ENCODE measurements at regions of chr11 and their contacts with region 1.

Region 1: GRCh38 chr11:118791111-118791965 is at the start of gene DDX6:
- DNase-seq: peak; percentile 75
- ATAC-seq: peak; percentile 65
- H3K4me3 ChIP-seq: peak within 1 kb of the TSS; percentile 88
- H3K27ac ChIP-seq: peak within 1 kb of the TSS; percentile 81
- H3K4me1 ChIP-seq: peaks cover 31% of the 10 kb centered on the region
- H3K27me3 ChIP-seq: no peaks in the 10 kb centered on the region
- CTCF ChIP-seq: peak; percentile 26
- total RNA-seq, gene DDX6: 59.4 and 66.3 TPM in 2 replicates

Region 2: DNA sequence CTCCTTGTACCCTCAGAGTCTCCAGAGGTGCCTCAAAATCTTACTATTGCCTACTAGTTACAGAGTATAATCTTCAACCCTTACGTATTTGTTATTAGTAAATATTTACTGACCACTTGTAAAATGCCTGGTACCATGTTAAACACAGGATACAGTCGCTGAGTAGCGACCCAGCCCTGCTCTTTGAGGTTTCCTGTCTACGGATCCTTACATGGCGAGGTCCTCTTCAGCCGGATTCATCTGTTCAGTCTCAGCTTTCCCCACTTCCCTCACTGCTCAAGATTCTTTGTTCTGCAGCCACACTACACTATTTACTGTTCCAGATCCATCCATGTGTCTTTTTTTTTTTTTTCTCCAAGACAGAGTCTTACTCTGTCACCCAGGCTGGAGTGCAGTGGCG is 277.2 kb before region 1 on chr11:
- CTCF ChIA-PET with region 1: no interaction called
- POLR2A ChIA-PET with region 1: no interaction called
- intact Hi-C with region 1: no loop called
- DNase-seq: no peak
- ATAC-seq: peak; percentile 67
- H3K4me3 ChIP-seq: no peak overlapping the region
- H3K27ac ChIP-seq: no peak overlapping the region
- H3K4me1 ChIP-seq: no peaks in the 10 kb centered on the region
- H3K27me3 ChIP-seq: no peaks in the 10 kb centered on the region
- CTCF ChIP-seq: no peak

Region 3: GRCh38 chr11:118547132-118547531 is 244.2 kb before region 1 on chr11:
- CTCF ChIA-PET with region 1: no interaction called
- POLR2A ChIA-PET with region 1: no interaction called
- intact Hi-C with region 1: no loop called
- DNase-seq: no peak
- ATAC-seq: no peak
- H3K4me3 ChIP-seq: no peak overlapping the region
- H3K27ac ChIP-seq: no peak overlapping the region
- H3K4me1 ChIP-seq: no peaks in the 10 kb centered on the region
- H3K27me3 ChIP-seq: no peaks in the 10 kb centered on the region
- CTCF ChIP-seq: no peak

Region 4: DNA sequence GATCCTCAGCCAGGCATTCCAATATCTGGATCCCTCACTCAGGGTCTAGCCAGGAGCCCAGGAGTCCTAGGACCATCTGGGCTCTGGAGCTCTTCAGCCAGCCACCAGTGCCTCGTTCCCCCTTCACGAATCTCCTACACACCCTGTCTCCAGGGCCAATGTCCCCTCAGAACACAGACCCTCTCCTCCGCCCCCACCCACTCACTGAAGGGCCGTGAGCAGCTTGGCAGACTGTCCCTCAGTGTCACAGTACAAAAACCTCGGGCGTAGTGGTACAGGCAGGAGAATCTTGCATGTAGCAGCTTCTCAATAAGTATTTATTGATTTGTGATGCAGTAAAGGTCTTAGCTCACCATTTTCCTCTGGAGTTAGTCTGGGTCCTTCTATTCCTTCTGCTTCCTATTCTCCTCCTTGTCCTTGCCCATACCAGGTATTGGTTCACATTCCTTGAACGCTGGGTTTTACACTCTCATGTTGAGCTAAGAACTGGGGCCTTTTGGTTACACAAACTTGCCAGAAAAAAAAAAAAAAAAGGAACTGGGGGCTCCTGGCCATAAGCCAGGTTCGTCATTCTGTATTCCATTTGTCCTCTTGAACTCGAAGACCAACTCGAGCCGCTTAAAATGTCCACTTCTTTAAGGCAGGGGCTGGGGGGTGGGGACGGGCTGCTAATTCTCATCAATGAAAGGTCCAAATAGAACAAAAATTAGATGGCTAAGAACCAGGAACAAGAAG is 94.7 kb after region 1 on chr11:
- CTCF ChIA-PET with region 1: no interaction called
- POLR2A ChIA-PET with region 1: interaction called, 17 read pairs
- intact Hi-C with region 1: no loop called
- DNase-seq: no peak
- ATAC-seq: no peak
- H3K4me3 ChIP-seq: no peak overlapping the region
- H3K27ac ChIP-seq: no peak overlapping the region
- H3K4me1 ChIP-seq: peaks cover 16% of the 10 kb centered on the region
- H3K27me3 ChIP-seq: no peaks in the 10 kb centered on the region
- CTCF ChIP-seq: no peak

Region 5: DNA sequence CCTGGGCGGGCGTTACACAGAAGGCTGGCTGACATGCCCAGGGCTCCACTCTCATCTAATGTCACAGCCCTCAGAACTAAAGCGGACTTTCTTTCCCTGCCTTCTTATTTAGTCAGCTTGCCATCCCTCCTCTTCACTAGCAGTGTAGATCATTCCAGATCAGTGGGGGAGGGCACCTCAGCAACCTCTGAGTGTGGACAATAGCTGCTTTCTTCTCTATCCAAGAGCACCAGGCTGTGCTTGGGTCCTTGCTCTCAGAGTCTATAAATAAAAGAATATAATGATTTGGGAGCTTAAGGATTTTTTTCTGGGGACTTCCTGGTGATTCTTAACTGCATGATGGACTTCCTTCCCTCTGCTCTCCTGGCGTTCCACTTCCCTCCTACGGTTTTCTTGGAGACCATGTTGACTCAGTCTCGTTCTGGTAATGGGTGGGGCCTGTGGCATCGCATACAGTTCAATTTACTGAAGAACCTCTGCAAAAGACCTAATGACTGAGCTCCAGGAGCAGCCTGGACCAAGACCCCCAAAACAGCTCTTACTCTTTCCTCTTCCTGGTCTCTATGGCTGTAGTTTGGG is 290.4 kb after region 1 on chr11:
- CTCF ChIA-PET with region 1: no interaction called
- POLR2A ChIA-PET with region 1: no interaction called
- intact Hi-C with region 1: no loop called
- DNase-seq: no peak
- ATAC-seq: no peak
- H3K4me3 ChIP-seq: no peak overlapping the region
- H3K27ac ChIP-seq: no peak overlapping the region
- H3K4me1 ChIP-seq: peaks cover 10% of the 10 kb centered on the region
- H3K27me3 ChIP-seq: no peaks in the 10 kb centered on the region
- CTCF ChIP-seq: no peak

Measured in PC-3 (cell line).